BJ (cell line): ENCODE measurements at regions of chr14 and their contacts with region 1.

Region 1: GRCh38 chr14:91996948-91997371 is 42.9 kb downstream of the TRIP11 start:
- DNase-seq: peak; percentile 85
- H3K4me3 ChIP-seq: no peak overlapping the region
- H3K27me3 ChIP-seq: no peaks in the 10 kb centered on the region
- CTCF ChIP-seq: peak; percentile 71

Region 2: DNA sequence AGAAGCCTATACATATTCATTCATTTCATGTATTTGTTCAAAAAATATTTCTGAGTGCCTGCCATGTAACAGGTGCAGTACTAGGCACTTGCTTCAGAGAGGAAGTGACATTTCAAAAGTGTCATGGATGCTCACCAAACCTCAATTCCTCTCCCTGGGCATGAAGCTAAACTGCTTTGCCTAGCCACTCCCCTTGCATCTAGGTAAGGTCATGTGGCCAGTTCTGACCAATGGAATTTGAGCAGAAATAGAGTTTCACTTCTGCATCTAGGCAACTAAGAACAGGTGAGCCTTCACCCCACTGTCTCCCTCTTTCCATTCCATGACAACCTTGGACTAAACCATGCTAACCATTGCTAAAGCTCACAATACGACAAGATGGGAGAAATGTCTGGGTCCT is 157.2 kb before region 1 on chr14:
- CTCF ChIA-PET with region 1: no interaction called
- POLR2A ChIA-PET with region 1: no interaction called
- DNase-seq: no peak
- H3K4me3 ChIP-seq: no peak overlapping the region
- H3K27me3 ChIP-seq: peaks cover 9% of the 10 kb centered on the region
- CTCF ChIP-seq: no peak

Region 3: DNA sequence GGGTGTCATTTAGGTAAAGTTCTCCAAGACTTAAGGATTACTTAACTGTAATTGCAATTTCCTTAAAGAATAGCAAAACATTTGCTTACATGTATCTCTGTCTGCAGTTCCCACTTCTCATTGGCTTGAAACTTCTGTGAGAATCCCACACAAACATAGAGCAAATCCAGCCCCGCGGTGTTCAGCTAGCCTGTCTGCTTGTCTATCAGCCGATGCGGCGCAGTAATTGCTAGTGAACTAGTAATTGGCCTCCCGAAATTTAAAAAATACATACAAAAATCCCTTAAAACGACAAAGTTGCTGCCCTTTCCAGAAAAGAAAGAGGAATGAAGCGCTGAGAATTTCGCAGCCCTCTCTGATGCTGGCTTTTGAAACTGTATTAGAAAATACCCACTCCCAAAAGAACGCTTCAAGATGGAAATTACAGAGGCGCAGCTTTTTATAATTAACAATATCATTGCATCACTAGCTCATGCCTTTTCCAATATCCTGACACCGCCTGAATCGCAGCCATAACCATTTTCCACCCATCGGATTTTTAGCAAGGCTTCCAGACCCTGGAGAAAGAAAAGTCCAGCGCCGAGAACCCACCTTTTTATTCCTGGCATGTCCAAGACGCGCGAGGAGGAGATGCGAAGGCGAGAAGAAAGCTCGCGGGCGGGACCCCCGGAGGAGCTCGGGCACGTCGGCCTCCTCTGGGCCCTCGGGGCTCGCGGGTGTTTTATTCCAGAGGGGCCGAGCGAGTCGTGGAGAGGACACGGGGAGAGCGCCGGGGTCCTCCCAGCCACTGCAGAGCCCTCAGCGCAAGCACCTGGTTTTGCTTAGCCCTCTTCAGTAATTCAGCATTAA is 50.1 kb before region 1 on chr14:
- CTCF ChIA-PET with region 1: interaction called, 18 read pairs
- POLR2A ChIA-PET with region 1: no interaction called
- DNase-seq: no peak
- H3K4me3 ChIP-seq: peak overlapping the region; percentile 80
- H3K27me3 ChIP-seq: no peaks in the 10 kb centered on the region
- CTCF ChIP-seq: no peak